ENCODE measurements at regions of chr14 and their contacts with region 1.

Region 1: GRCh38 chr14:93705513-93706156 is 82.7 kb downstream of the PRIMA1 start:
- DNase-seq: no peak
- H3K4me3 ChIP-seq: no peak overlapping the region
- H3K27ac ChIP-seq: no peak overlapping the region
- H3K4me1 ChIP-seq: no peaks in the 10 kb centered on the region
- H3K27me3 ChIP-seq: no peaks in the 10 kb centered on the region
- CTCF ChIP-seq: no peak
- POLR2A ChIP-seq: no peak

Region 2: DNA sequence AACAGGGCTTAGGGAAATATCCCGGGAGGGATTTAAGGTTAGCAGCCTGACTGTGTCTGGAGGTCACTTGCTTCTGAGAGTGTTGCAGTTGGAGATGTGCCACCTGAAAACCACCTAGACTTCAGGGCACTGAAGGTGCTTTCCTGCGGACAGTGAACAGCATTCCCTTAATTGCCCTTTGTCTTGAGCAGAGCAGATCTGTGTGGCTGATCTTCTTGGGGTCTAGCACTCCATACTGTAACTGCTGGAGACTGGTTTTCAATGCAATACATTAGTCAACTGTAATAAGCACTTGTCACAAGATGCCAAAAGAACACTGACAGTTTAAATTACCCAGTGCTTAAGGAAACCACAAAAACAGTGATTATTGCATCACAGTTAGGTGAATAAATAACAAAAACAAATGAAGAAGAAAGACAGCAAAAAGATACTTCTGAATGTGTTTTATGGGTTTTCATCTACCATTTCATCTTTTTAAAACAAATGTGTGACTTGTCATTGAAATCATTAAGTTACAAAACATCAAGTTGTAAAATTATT is 29.1 kb before region 1 on chr14:
- CTCF ChIA-PET with region 1: no interaction called
- POLR2A ChIA-PET with region 1: no interaction called
- dilution Hi-C with region 1: no loop called
- intact Hi-C with region 1: no loop called
- DNase-seq: no peak
- H3K4me3 ChIP-seq: no peak overlapping the region
- H3K27ac ChIP-seq: no peak overlapping the region
- H3K4me1 ChIP-seq: no peaks in the 10 kb centered on the region
- H3K27me3 ChIP-seq: no peaks in the 10 kb centered on the region
- CTCF ChIP-seq: no peak
- POLR2A ChIP-seq: no peak

Region 3: GRCh38 chr14:93688820-93689219 is 16.8 kb before region 1 on chr14:
- CTCF ChIA-PET with region 1: no interaction called
- POLR2A ChIA-PET with region 1: interaction called, 13 read pairs
- dilution Hi-C with region 1: no loop called
- intact Hi-C with region 1: no loop called
- DNase-seq: no peak
- H3K4me3 ChIP-seq: no peak overlapping the region
- H3K27ac ChIP-seq: no peak overlapping the region
- H3K4me1 ChIP-seq: no peaks in the 10 kb centered on the region
- H3K27me3 ChIP-seq: no peaks in the 10 kb centered on the region
- CTCF ChIP-seq: no peak
- POLR2A ChIP-seq: no peak